ENCODE measurements at regions of chr13 and their contacts with region 1.

Region 1: GRCh38 chr13:94435604-94436226 is 43.8 kb downstream of the DCT start:
- DNase-seq: peak; percentile 55
- H3K4me3 Mint-ChIP-seq: no peak overlapping the region
- H3K27ac Mint-ChIP-seq: no peak overlapping the region
- H3K4me1 Mint-ChIP-seq: no peaks in the 10 kb centered on the region
- H3K27me3 Mint-ChIP-seq: peaks cover 20% of the 10 kb centered on the region
- CTCF ChIP-seq: peak; percentile 63

Region 2: DNA sequence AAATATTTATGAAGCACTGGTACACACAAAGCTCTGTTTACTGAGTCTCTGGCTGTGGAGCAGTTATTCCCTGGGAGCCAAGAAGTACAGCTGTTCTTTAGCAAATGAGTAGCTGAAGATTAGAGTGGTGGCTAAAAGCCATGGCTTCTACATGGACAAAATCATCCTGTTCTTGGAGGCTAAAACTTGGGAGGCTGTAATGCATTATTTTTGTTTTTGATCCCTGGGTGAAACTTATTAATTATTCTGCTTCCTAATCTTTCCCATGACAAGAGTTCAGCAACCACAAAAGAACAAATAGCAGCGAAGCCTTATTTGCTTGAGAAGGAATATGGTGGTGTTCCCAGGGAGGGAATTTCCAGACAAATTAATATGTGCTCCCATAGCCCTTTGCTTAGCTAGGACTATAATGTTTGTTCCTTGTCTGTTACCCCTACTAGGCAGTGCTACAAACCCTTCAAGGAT is 65.7 kb before region 1 on chr13:
- CTCF ChIA-PET with region 1: no interaction called
- POLR2A ChIA-PET with region 1: no interaction called
- intact Hi-C with region 1: no loop called
- DNase-seq: no peak
- H3K4me3 Mint-ChIP-seq: no peak overlapping the region
- H3K27ac Mint-ChIP-seq: no peak overlapping the region
- H3K4me1 Mint-ChIP-seq: no peaks in the 10 kb centered on the region
- H3K27me3 Mint-ChIP-seq: no peaks in the 10 kb centered on the region
- CTCF ChIP-seq: no peak

Region 3: GRCh38 chr13:94464771-94465170 is 29.1 kb after region 1 on chr13:
- CTCF ChIA-PET with region 1: interaction called, 13 read pairs
- POLR2A ChIA-PET with region 1: no interaction called
- intact Hi-C with region 1: no loop called
- DNase-seq: no peak
- H3K4me3 Mint-ChIP-seq: no peak overlapping the region
- H3K27ac Mint-ChIP-seq: no peak overlapping the region
- H3K4me1 Mint-ChIP-seq: no peaks in the 10 kb centered on the region
- H3K27me3 Mint-ChIP-seq: no peaks in the 10 kb centered on the region
- CTCF ChIP-seq: no peak

Region 4: DNA sequence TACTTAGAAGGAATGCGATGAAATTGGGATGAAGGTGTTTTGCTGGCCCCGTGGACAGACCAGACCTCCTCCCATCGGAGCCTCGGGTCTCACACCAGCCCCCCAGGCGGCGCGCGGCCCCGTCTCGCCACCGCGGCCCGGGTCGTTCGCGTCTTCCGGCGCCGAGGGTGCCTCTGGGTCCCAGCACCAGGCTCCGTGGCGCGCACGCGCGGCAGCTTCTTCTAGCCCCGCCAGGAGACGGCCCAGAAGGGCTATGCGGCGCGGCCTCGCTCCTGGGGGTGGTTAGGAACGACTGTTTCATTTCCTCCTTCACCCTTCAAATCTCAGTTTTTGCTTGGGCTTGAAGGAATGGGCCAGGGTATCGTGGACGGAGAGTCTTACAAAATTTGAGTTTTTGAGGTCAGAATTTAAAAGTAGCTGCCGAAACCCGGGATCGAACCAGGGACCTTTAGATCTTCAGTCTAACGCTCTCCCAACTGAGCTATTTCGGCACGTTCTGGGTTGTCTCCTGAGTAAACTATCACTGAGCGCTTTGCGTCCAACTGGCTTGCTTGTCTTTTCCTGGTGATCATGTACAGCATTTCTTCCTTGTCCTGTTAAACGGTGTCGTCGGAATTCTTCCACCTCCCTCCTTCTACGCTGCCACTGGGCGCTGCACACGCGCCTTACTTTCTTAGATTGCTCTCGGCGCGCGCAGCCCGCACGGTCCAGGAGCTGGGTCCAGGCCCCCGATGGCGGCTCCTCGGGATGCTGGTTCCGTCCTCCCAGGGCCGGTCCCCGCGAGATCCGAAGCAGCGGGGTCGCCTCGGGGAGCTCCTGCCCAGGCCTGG is 113.7 kb after region 1 on chr13:
- CTCF ChIA-PET with region 1: interaction called, 10 read pairs
- POLR2A ChIA-PET with region 1: no interaction called
- intact Hi-C with region 1: loop called (anchors 1 kb)
- DNase-seq: peak; percentile 86
- H3K4me3 Mint-ChIP-seq: peak overlapping the region; percentile 74
- H3K27ac Mint-ChIP-seq: peak overlapping the region; percentile 86
- H3K4me1 Mint-ChIP-seq: peaks cover 7% of the 10 kb centered on the region
- H3K27me3 Mint-ChIP-seq: no peaks in the 10 kb centered on the region
- CTCF ChIP-seq: no peak

Region 5: DNA sequence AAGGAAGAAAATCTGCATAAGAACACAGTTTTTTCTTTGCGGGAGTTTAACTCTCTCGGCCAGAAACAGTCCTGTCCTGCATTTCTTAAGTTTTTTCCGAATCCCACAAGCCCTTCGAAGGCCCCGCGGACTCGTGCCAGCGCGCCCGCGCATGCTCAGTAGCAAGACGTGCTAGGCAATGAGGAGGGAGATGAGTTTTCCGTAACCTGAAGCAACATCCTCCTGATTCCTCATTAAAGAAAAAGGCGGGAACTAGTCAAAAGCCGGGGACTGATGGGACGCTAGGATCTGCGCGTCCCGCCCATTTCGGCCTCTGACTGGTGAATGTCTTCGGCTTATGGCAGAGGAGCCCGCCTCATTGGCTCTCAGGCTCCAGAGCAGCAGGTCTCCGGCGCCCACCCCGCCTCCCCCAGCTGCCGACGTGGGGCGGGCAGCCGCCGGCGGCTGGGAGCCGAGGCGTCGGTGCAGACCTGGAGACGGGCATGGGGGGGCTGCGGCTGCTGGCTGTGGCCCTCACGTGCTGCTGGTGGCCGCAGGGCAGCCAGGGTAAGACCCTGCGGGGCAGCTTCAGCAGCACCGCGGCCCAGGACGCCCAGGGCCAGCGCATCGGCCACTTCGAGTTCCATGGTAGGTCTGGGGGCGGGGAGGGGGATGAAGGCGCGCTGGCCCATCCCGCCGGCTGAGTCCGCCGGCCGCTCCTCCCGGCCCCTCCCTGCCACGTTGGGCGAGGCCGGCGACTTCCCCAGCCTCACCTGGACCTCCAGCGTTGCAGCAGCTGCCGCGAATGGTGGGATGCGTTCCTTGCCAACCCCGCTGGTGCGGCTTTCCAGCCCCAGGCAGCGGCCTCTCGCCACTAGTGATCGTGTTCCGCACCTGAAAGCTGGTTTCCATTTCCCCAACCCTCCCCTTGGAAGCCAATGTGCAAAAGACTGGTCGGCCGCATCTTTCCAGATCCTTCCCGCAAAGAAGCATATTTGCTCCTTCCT is 166.0 kb after region 1 on chr13 and contains the start of gene GPR180:
- CTCF ChIA-PET with region 1: interaction called, 12 read pairs
- POLR2A ChIA-PET with region 1: interaction called, 8 read pairs
- intact Hi-C with region 1: no loop called
- DNase-seq: peak; percentile 100
- H3K4me3 Mint-ChIP-seq: peak within 1 kb of the TSS; percentile 87
- H3K27ac Mint-ChIP-seq: peak within 1 kb of the TSS; percentile 51
- H3K4me1 Mint-ChIP-seq: peaks cover 23% of the 10 kb centered on the region
- H3K27me3 Mint-ChIP-seq: no peaks in the 10 kb centered on the region
- CTCF ChIP-seq: no peak
- total RNA-seq, gene GPR180: 4.8 and 4.9 TPM in 2 replicates

Measured in MCF 10A (cell line).